ENCODE measurements at regions of chr1 and their contacts with region 1.

Region 1: DNA sequence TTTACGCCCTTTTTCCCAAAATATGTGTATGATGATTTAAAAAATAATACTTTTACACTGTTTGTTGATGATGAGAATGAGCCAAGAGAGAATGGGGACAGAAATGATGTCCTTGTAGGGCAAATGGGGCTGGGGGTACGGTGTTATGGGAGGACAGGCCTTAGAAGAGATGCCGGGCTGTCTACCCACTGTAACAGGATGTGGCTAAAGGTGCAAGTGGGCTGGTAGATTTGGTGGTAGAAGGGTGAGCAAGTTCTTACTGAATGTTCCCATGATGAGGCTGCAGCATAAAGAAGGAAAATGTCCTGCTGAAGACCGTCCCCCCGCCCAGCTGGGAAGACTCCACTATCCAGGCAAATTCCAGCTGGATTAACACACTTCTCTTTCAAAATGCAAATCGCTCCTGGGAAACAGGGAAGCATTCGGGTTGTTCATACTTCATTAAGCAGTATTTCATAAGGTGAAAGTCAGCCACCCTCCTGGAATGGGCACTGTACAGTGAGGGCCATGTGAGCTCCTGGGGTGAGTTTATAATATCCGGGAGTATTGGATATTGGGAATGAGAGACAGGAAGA is 14.0 kb downstream of the GPA33 start:
- DNase-seq: no peak
- H3K4me3 Mint-ChIP-seq: no peak overlapping the region
- H3K27ac Mint-ChIP-seq: no peak overlapping the region
- H3K4me1 Mint-ChIP-seq: no peaks in the 10 kb centered on the region
- H3K27me3 Mint-ChIP-seq: peaks cover 32% of the 10 kb centered on the region
- CTCF ChIP-seq: no peak

Region 2: DNA sequence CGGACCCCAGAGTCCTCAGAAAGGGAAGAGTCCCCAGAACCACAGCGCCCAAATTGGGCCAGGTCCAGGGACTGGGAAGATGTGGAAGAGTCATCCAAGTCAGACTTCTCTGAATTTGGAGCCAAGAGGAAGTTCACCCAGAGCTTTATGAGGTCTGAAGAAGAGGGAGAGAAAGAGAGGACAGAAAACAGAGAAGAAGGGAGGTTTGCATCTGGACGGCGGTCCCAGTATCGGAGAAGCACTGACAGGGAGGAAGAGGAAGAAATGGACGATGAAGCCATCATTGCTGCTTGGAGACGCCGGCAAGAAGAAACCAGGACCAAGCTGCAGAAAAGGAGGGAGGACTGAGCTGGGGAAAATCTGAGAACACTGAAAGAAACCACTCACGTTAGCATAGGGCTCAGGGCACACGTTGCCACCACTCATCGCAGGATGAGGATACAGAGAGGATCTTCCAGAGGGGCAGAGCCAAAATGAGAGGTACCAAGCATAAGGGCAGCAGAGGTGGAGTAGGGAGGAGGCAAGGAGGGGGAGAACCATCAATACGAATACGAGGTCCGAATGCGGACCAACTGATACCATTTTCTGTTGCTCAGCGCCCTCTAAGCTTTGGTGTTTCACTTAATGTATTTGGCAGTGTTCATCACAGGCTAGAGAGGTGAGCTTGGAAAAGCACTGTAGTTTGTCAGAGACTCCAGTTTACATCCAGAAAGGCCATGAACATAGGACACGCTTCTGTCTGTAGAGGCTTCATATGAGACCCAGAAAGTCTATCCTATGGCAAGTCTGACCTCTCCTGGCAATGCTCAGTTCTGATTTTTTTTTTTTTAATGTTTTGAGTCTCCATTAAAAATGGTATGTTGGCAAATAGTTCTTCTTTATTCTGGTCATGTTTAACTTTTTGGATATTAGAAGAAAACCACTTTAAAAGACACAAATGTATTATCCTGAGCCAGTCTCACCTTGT is 52.3 kb after region 1 on chr1:
- CTCF ChIA-PET with region 1: interaction called, 11 read pairs
- POLR2A ChIA-PET with region 1: no interaction called
- intact Hi-C with region 1: no loop called
- DNase-seq: peak; percentile 31
- H3K4me3 Mint-ChIP-seq: no peak overlapping the region
- H3K27ac Mint-ChIP-seq: no peak overlapping the region
- H3K4me1 Mint-ChIP-seq: no peaks in the 10 kb centered on the region
- H3K27me3 Mint-ChIP-seq: peaks cover 33% of the 10 kb centered on the region
- CTCF ChIP-seq: peak; percentile 43